AG04450 (cell line): ENCODE measurements at regions of chr12 and their contacts with region 1.

Region 1: DNA sequence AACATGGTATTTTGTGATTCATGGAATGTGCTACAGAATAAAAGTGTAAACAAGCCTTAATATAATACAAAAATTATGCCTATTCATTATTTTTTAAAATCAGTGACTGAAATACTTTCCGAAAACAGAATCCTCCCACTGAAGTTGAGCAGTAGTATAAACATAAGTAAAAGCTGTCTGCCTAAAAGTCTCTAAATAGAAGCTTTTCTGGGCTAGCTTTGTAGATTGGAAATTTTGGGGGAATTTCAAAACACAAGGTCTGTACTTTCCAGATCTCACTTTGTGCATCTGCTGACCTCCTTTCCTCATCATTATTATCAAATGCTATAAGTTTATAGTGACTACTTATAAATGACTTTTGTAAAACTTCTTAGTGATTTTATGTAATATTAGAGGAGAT is 80.4 kb upstream of the TRHDE start:
- DNase-seq: no peak
- H3K4me3 ChIP-seq: no peak overlapping the region
- H3K27ac ChIP-seq: no peak overlapping the region
- H3K27me3 ChIP-seq: peaks cover 3% of the 10 kb centered on the region
- CTCF ChIP-seq: no peak

Region 2: GRCh38 chr12:73699318-73699717 is 1507.6 kb after region 1 on chr12:
- CTCF ChIA-PET with region 1: no interaction called
- POLR2A ChIA-PET with region 1: interaction called, 10 read pairs
- DNase-seq: no peak
- H3K4me3 ChIP-seq: no peak overlapping the region
- H3K27ac ChIP-seq: no peak overlapping the region
- H3K27me3 ChIP-seq: no peaks in the 10 kb centered on the region
- CTCF ChIP-seq: no peak